ENCODE measurements at regions of chr9 and their contacts with region 1.

Region 1: GRCh38 chr9:77177161-77177893 is at the start of gene VPS13A:
- DNase-seq: peak; percentile 74 to 96 (median 91)
- ATAC-seq: peak; percentile 81
- H3K4me3 ChIP-seq: peak within 1 kb of the TSS; percentile 74 to 92
- H3K4me3 Mint-ChIP-seq: peak within 1 kb of the TSS; percentile 92
- H3K27ac ChIP-seq: peak within 1 kb of the TSS; percentile 72 to 82
- H3K27ac Mint-ChIP-seq: peak within 1 kb of the TSS; percentile 93
- H3K4me1 ChIP-seq: peaks cover 11% of the 10 kb centered on the region
- H3K4me1 Mint-ChIP-seq: peaks cover 40% of the 10 kb centered on the region
- H3K27me3 ChIP-seq: no peaks in the 10 kb centered on the region
- H3K27me3 Mint-ChIP-seq: no peaks in the 10 kb centered on the region
- CTCF ChIP-seq: no peak
- total RNA-seq, gene VPS13A: 35.5 to 37.4 TPM

Region 2: DNA sequence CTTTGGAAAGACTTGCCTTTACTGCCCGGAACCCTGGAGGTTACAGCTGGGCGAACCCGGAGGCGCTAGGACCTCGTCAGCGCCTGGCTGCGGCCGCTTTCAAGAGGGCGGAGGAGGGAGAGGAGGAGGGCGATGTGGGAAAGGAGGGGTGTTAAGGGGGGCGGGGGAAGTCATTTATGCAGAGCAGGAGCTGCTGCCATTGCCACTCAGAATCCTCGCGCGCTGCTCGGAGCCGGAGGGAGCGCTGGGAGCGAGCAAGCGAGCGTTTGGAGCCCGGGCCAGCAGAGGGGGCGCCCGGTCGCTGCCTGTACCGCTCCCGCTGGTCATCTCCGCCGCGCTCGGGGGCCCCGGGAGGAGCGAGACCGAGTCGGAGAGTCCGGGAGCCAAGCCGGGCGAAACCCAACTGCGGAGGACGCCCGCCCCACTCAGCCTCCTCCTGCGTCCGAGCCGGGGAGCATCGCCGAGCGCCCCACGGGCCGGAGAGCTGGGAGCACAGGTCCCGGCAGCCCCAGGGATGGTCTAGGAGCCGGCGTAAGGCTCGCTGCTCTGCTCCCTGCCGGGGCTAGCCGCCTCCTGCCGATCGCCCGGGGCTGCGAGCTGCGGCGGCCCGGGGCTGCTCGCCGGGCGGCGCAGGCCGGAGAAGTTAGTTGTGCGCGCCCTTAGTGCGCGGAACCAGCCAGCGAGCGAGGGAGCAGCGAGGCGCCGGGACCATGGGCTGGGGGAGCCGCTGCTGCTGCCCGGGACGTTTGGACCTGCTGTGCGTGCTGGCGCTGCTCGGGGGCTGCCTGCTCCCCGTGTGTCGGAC is 1286.7 kb before region 1 on chr9 and contains the start of gene PCSK5:
- CTCF ChIA-PET with region 1: no interaction called
- POLR2A ChIA-PET with region 1: no interaction called
- intact Hi-C with region 1: loop called (anchors 2 to 10 kb)
- DNase-seq: peak; percentile 66 to 92 (median 85)
- ATAC-seq: peak; percentile 90
- H3K4me3 ChIP-seq: peak within 1 kb of the TSS; percentile 81 to 82
- H3K4me3 Mint-ChIP-seq: peak within 1 kb of the TSS; percentile 92
- H3K27ac ChIP-seq: peak within 1 kb of the TSS; percentile 60 to 70
- H3K27ac Mint-ChIP-seq: peak within 1 kb of the TSS; percentile 85
- H3K4me1 ChIP-seq: peaks cover 16% of the 10 kb centered on the region
- H3K4me1 Mint-ChIP-seq: peaks cover 54% of the 10 kb centered on the region
- H3K27me3 ChIP-seq: peaks cover 0 to 6% of the 10 kb centered on the region in 2 experiments
- H3K27me3 Mint-ChIP-seq: no peaks in the 10 kb centered on the region
- CTCF ChIP-seq: no peak
- total RNA-seq, gene PCSK5: 13.7 to 13.8 TPM

Region 3: GRCh38 chr9:77291714-77292113 is 114.4 kb after region 1 on chr9:
- CTCF ChIA-PET with region 1: no interaction called
- POLR2A ChIA-PET with region 1: no interaction called
- intact Hi-C with region 1: no loop called
- DNase-seq: no peak
- ATAC-seq: no peak
- H3K4me3 ChIP-seq: no peak overlapping the region
- H3K4me3 Mint-ChIP-seq: no peak overlapping the region
- H3K27ac ChIP-seq: no peak overlapping the region
- H3K27ac Mint-ChIP-seq: no peak overlapping the region
- H3K4me1 ChIP-seq: no peaks in the 10 kb centered on the region
- H3K4me1 Mint-ChIP-seq: peaks cover 3% of the 10 kb centered on the region
- H3K27me3 ChIP-seq: no peaks in the 10 kb centered on the region
- H3K27me3 Mint-ChIP-seq: no peaks in the 10 kb centered on the region
- CTCF ChIP-seq: no peak

Region 4: DNA sequence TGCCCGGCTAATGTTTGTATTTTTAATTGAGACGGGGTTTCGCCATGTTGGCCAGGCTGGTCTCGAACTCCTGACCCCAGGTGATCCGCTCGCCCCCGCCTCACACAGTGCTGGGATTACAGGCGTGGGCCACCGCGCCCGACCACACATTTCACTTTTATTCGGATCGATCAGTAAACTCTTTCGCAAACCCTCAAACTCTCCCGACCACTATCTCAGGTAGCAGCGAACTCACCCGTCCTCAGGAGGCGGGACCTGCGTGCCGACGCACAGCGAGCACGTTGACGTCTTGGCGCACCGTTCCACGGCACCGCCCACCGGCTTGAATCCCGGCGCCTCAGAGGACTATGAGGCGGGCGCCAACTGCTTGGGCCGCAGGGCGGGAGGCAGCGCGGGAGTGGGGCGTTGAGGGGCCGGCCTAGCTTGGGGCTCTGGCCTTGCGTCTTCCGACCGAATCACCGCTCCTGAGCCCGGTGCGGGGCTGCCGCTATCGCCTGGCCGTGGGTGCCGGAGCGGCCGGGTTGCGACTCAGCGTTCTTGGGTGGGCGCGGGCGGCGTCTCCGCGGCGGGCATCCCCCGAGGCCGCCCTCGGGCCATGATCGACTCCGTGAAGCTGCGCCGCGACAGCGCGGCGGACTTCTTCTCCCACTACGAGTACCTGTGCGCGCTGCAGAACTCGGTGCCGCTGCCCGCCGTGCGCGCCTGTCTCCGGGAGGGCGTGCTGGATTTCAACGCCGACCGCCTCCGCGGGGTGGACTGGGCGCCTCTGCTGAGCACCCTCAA is 1058.6 kb after region 1 on chr9 and contains the start of gene CEP78:
- CTCF ChIA-PET with region 1: no interaction called
- POLR2A ChIA-PET with region 1: no interaction called
- intact Hi-C with region 1: loop called (anchors 5 kb)
- DNase-seq: peak; percentile 71 to 95 (median 87)
- ATAC-seq: peak; percentile 97
- H3K4me3 ChIP-seq: peak within 1 kb of the TSS; percentile 90 to 91
- H3K4me3 Mint-ChIP-seq: no peak within 1 kb of the TSS
- H3K27ac ChIP-seq: peak within 1 kb of the TSS; percentile 83 to 87
- H3K27ac Mint-ChIP-seq: peak within 1 kb of the TSS; percentile 93
- H3K4me1 ChIP-seq: peaks cover 33% of the 10 kb centered on the region
- H3K4me1 Mint-ChIP-seq: peaks cover 36% of the 10 kb centered on the region
- H3K27me3 ChIP-seq: no peaks in the 10 kb centered on the region
- H3K27me3 Mint-ChIP-seq: no peaks in the 10 kb centered on the region
- CTCF ChIP-seq: no peak
- total RNA-seq, gene CEP78: 17.7 to 18.5 TPM

Measured in CD8-positive, alpha-beta T cell (primary cell).